PC-9 (cell line): ENCODE measurements at regions of chr19 and their contacts with region 1.

Region 1: GRCh38 chr19:37988758-37989635 is 82.0 kb downstream of the SIPA1L3 start:
- DNase-seq: no peak
- H3K4me3 ChIP-seq: no peak overlapping the region
- H3K27ac ChIP-seq: no peak overlapping the region
- H3K4me1 ChIP-seq: peaks cover 41% of the 10 kb centered on the region
- H3K27me3 ChIP-seq: no peaks in the 10 kb centered on the region
- CTCF ChIP-seq: no peak

Region 2: GRCh38 chr19:38004521-38005223 is 15.7 kb after region 1 on chr19:
- CTCF ChIA-PET with region 1: no interaction called
- POLR2A ChIA-PET with region 1: interaction called, 10 read pairs
- intact Hi-C with region 1: no loop called
- DNase-seq: peak in 1 of 2 experiments; percentile 68
- H3K4me3 ChIP-seq: no peak overlapping the region
- H3K27ac ChIP-seq: no peak overlapping the region
- H3K4me1 ChIP-seq: no peaks in the 10 kb centered on the region
- H3K27me3 ChIP-seq: no peaks in the 10 kb centered on the region
- CTCF ChIP-seq: no peak

Region 3: GRCh38 chr19:38022791-38023670 is 34.0 kb after region 1 on chr19:
- CTCF ChIA-PET with region 1: no interaction called
- POLR2A ChIA-PET with region 1: interaction called, 10 read pairs
- intact Hi-C with region 1: no loop called
- DNase-seq: no peak
- H3K4me3 ChIP-seq: no peak overlapping the region
- H3K27ac ChIP-seq: no peak overlapping the region
- H3K4me1 ChIP-seq: no peaks in the 10 kb centered on the region
- H3K27me3 ChIP-seq: no peaks in the 10 kb centered on the region
- CTCF ChIP-seq: no peak

Region 4: DNA sequence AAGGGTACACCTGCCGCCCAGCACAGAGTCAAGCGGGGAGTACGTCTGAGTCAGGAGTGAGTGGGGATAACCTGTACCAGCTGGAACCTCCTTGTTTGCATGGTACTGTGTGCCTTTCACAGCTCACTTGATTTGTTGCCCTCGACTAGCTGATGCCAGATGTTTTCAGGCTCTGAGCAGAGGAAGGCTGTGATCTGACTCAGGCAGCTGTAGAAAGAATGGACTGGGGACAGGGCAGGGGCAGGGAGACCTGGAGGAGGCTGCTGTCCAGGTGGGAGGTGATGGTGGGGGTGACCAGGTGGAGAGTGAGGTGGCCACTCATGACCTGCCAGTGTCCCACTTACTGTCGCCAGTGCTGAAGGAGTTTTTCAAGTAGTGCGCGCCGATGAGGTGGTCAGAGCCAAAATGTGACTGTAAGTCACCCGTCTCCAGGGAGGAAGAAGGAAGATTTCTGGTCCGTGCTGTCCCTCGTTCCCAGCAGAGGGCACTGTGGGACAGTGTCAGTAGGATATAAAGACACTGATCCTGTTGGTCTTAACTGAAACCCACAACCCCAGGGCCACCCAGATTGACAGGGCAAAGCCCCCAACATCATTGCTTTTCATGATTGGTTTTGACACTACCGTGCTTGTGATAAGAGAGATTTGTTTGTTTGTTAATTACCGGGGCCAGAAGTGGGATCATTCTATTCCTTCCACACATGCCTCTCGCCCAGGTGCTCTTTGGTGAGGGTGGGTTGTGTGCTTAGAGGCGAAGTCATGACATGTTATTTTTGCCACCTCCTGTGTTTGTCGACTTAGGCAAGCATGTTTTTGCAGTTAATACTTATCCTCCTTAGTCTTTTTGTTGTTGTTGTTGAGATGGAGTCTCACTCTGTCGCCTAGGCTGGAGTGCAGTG is 106.7 kb after region 1 on chr19:
- CTCF ChIA-PET with region 1: no interaction called
- POLR2A ChIA-PET with region 1: no interaction called
- intact Hi-C with region 1: loop called (anchors 5 kb)
- DNase-seq: peak in 1 of 2 experiments; percentile 61
- H3K4me3 ChIP-seq: no peak overlapping the region
- H3K27ac ChIP-seq: no peak overlapping the region
- H3K4me1 ChIP-seq: no peaks in the 10 kb centered on the region
- H3K27me3 ChIP-seq: no peaks in the 10 kb centered on the region
- CTCF ChIP-seq: peak; percentile 74